Heart left ventricle (tissue), 16 donors: ENCODE measurements at regions of chr2 and their contacts with region 1.

Region 1: GRCh38 chr2:11344342-11344955 is at the start of gene ROCK2:
- DNase-seq: peak; percentile 90 to 93 (median 91)
- ATAC-seq: peak; percentile 84 to 92 (median 86)
- H3K4me3 ChIP-seq: peak within 1 kb of the TSS; percentile 69 to 100 (median 94)
- H3K27ac ChIP-seq: peak within 1 kb of the TSS; percentile 94 to 100 (median 99)
- H3K4me1 ChIP-seq: peaks cover 7 to 53% (median 36%) of the 10 kb centered on the region in 12 donors
- H3K27me3 ChIP-seq: no peaks in the 10 kb centered on the region
- CTCF ChIP-seq: no peak
- POLR2A ChIP-seq: peak in 1 of 2 donors; percentile 13
- total RNA-seq, gene ROCK2: 25.3 to 44.3 (median 39.0) TPM

Region 2: GRCh38 chr2:11154923-11155380 is 189.5 kb before region 1 on chr2:
- intact Hi-C with region 1: loop called in 3 of 10 experiments (anchors 10 kb)
- DNase-seq: peak; percentile 98 to 99 (median 99)
- ATAC-seq: peak; percentile 93 to 97 (median 96)
- H3K4me3 ChIP-seq: peak overlapping the region; percentile 20 to 98 (median 87)
- H3K27ac ChIP-seq: peak overlapping the region; percentile 66 to 97 (median 94)
- H3K4me1 ChIP-seq: peaks cover 0 to 27% (median 15%) of the 10 kb centered on the region in 12 donors
- H3K27me3 ChIP-seq: no peaks in the 10 kb centered on the region
- CTCF ChIP-seq: no peak
- POLR2A ChIP-seq: no peak

Region 3: GRCh38 chr2:11245322-11245721 is 99.1 kb before region 1 on chr2:
- intact Hi-C with region 1: loop called in 3 of 10 experiments (anchors 5 kb)
- DNase-seq: no peak
- ATAC-seq: no peak
- H3K4me3 ChIP-seq: no peak overlapping the region
- H3K27ac ChIP-seq: no peak overlapping the region
- H3K4me1 ChIP-seq: peaks cover 0 to 5% (median 0%) of the 10 kb centered on the region in 12 donors
- H3K27me3 ChIP-seq: no peaks in the 10 kb centered on the region
- CTCF ChIP-seq: no peak
- POLR2A ChIP-seq: no peak

Region 4: DNA sequence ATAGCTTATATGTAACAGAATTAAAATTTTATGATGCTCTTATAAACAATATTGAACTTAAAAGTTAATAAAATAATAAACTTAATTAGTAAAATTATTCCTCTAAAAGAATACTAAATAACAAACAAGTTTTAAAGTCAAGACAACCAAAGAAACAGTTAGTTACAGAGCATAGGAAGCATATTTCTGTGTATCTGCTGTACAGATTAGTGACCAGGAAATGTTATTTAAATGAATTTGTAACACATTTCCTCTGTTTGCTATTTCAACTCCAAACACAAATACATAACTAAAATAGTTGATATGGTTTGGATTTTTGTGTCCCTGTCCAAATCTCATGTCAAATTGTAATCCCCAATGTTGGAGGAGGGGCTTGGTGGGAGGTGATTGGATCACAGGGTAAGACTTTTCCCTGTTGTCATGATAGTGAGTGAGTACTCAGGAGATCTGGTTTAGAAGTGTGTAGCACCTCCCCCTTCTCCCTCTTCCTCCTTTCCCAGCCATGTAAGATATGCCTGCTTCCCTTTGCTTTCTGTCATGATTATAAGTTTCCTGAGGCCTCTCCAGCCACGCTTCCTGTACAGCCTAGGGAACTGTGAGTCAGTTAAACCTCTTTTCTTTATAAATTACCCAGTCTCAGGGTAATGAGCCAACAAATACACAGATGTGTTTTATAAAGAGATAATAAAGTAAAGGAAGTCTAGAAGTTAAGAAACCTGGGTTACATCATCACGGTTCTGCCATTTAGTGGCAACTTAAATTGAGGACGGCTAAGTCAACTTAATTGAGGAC is 51.8 kb before region 1 on chr2:
- intact Hi-C with region 1: loop called in 5 of 10 experiments (anchors 5 to 10 kb)
- DNase-seq: peak in 1 of 5 donors; percentile 15
- ATAC-seq: peak; percentile 20 to 89 (median 66)
- H3K4me3 ChIP-seq: no peak overlapping the region
- H3K27ac ChIP-seq: peak overlapping the region in 11 of 12 donors; percentile 5 to 50 (median 37)
- H3K4me1 ChIP-seq: peaks cover 0 to 65% (median 32%) of the 10 kb centered on the region in 12 donors
- H3K27me3 ChIP-seq: no peaks in the 10 kb centered on the region
- CTCF ChIP-seq: no peak
- POLR2A ChIP-seq: no peak

Region 5: GRCh38 chr2:11389551-11390528 is 45.4 kb after region 1 on chr2:
- intact Hi-C with region 1: loop called in 3 of 10 experiments (anchors 5 to 10 kb)
- DNase-seq: no peak
- ATAC-seq: no peak
- H3K4me3 ChIP-seq: no peak overlapping the region
- H3K27ac ChIP-seq: peak overlapping the region in 1 of 12 donors; percentile 4
- H3K4me1 ChIP-seq: peaks cover 0 to 50% (median 24%) of the 10 kb centered on the region in 12 donors
- H3K27me3 ChIP-seq: no peaks in the 10 kb centered on the region
- CTCF ChIP-seq: no peak
- POLR2A ChIP-seq: no peak

Region 6: GRCh38 chr2:11411768-11412448 is 67.5 kb after region 1 on chr2:
- intact Hi-C with region 1: loop called in 9 of 10 experiments (anchors 2 to 5 kb)
- DNase-seq: peak in 3 of 5 donors; percentile 61 to 73 (median 67)
- ATAC-seq: peak; percentile 54 to 81 (median 70)
- H3K4me3 ChIP-seq: peak overlapping the region in 11 of 12 donors; percentile 17 to 68 (median 46)
- H3K27ac ChIP-seq: peak overlapping the region in 2 of 12 donors; percentile 1 to 6
- H3K4me1 ChIP-seq: peaks cover 0 to 19% (median 8%) of the 10 kb centered on the region in 12 donors
- H3K27me3 ChIP-seq: no peaks in the 10 kb centered on the region
- CTCF ChIP-seq: peak; percentile 76 to 95 (median 86)
- POLR2A ChIP-seq: no peak